Transverse colon (tissue), 4 donors: ENCODE measurements at regions of chr16 and their contacts with region 1.

Region 1: GRCh38 chr16:70289229-70290098 is at the start of gene AARS1:
- DNase-seq: peak; percentile 97
- H3K4me3 ChIP-seq: peak within 1 kb of the TSS; percentile 63 to 91 (median 78)
- H3K27ac ChIP-seq: peak within 1 kb of the TSS; percentile 91 to 98 (median 96)
- H3K4me1 ChIP-seq: peaks cover 5 to 25% (median 15%) of the 10 kb centered on the region in 4 donors
- H3K27me3 ChIP-seq: no peaks in the 10 kb centered on the region
- CTCF ChIP-seq: peak in 2 of 5 experiments; percentile 24 to 26
- EP300 ChIP-seq: no peak
- POLR2A ChIP-seq: peak; percentile 97
- total RNA-seq, gene AARS1: 38.5 to 77.5 (median 54.6) TPM

Region 2: DNA sequence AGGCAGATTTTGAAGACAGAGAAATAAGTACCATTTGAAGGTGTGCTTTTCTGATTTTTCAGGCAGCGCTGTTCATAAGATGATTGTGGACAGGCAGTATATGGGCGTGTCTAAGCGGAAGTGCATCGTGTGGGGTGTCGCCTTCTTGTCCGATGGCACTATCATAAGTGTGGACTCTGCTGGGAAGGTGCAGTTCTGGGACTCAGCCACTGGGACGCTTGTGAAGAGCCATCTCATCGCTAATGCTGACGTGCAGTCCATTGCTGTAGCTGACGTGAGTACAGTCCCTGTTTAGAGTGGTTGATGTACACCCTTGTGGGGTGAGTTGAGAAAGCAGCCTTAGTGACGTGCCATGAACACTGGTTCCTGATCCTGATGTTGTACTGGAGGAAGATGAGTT is 1146.3 kb before region 1 on chr16:
- in situ Hi-C with region 1: no loop called
- intact Hi-C with region 1: loop called (anchors 5 kb)
- DNase-seq: peak; percentile 25
- H3K4me3 ChIP-seq: no peak overlapping the region
- H3K27ac ChIP-seq: no peak overlapping the region
- H3K4me1 ChIP-seq: no peaks in the 10 kb centered on the region
- H3K27me3 ChIP-seq: no peaks in the 10 kb centered on the region
- CTCF ChIP-seq: peak in 4 of 5 experiments; percentile 26 to 62 (median 36)
- EP300 ChIP-seq: no peak
- POLR2A ChIP-seq: no peak

Region 3: GRCh38 chr16:70395345-70395901 is 106.0 kb after region 1 on chr16:
- in situ Hi-C with region 1: no loop called
- intact Hi-C with region 1: no loop called
- DNase-seq: peak; percentile 89
- H3K4me3 ChIP-seq: no peak overlapping the region
- H3K27ac ChIP-seq: peak overlapping the region in 1 of 4 donors; percentile 15
- H3K4me1 ChIP-seq: peaks cover 0 to 9% (median 3%) of the 10 kb centered on the region in 4 donors
- H3K27me3 ChIP-seq: no peaks in the 10 kb centered on the region
- CTCF ChIP-seq: peak; percentile 61 to 84 (median 75)
- EP300 ChIP-seq: no peak
- POLR2A ChIP-seq: no peak

Region 4: GRCh38 chr16:70470927-70471341 is 181.5 kb after region 1 on chr16:
- in situ Hi-C with region 1: no loop called
- intact Hi-C with region 1: no loop called
- DNase-seq: peak; percentile 26
- H3K4me3 ChIP-seq: no peak overlapping the region
- H3K27ac ChIP-seq: no peak overlapping the region
- H3K4me1 ChIP-seq: no peaks in the 10 kb centered on the region
- H3K27me3 ChIP-seq: no peaks in the 10 kb centered on the region
- CTCF ChIP-seq: peak; percentile 24 to 57 (median 34)
- EP300 ChIP-seq: no peak
- POLR2A ChIP-seq: no peak